ENCODE measurements at regions of chr14 and their contacts with region 1.

Region 1: DNA sequence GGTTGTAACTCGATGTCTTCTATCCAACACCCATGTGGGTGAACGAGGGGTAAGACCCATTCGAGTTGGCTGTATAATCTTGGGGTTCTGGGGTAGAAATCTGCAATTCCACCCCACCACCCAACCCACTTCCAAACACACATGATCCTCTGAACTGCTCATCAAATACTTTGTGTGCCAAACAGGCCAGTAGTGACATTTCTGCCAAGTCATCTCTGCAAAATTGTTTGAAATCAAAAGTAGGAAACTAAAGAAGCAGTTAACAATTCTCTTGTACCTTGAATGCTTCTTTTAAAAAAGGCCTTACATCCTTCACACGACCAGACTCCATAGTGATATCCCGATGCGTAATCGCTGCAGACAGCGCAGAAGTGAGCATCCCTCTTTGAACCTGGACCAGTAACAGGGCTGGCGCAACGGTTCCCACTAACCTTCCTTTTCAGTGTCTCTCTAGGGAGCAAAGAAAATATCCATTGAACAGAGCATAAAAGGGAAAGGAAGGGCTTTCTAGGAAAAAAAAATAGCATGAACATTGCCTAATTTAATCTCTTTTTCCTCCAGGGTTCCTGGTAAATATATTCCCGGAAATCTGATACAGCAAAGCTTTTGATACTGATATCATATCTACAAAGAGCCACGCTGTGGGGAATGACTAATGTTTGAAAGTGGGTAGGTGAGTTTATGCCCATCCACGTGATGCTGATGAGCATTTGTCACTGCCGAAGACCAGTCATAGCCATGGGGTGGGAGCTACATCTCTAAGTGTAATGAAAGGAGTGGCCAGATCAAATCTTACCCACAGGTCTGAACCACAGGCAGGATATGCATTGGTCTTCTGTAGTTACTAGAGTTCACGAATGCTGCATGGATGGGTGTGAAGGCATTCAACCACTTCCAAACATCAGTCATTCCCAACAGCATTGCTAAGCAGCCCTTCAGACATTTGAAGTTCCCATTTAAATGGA is 14.2 kb downstream of the ESR2 start:
- DNase-seq: no peak
- H3K4me3 ChIP-seq: no peak overlapping the region
- H3K27ac ChIP-seq: no peak overlapping the region
- H3K4me1 ChIP-seq: no peaks in the 10 kb centered on the region
- H3K27me3 ChIP-seq: no peaks in the 10 kb centered on the region
- CTCF ChIP-seq: no peak

Region 2: GRCh38 chr14:63418020-63418419 is 862.0 kb before region 1 on chr14:
- CTCF ChIA-PET with region 1: no interaction called
- POLR2A ChIA-PET with region 1: no interaction called
- intact Hi-C with region 1: no loop called
- DNase-seq: no peak
- H3K4me3 ChIP-seq: no peak overlapping the region
- H3K27ac ChIP-seq: no peak overlapping the region
- H3K4me1 ChIP-seq: no peaks in the 10 kb centered on the region
- H3K27me3 ChIP-seq: no peaks in the 10 kb centered on the region
- CTCF ChIP-seq: no peak

Region 3: DNA sequence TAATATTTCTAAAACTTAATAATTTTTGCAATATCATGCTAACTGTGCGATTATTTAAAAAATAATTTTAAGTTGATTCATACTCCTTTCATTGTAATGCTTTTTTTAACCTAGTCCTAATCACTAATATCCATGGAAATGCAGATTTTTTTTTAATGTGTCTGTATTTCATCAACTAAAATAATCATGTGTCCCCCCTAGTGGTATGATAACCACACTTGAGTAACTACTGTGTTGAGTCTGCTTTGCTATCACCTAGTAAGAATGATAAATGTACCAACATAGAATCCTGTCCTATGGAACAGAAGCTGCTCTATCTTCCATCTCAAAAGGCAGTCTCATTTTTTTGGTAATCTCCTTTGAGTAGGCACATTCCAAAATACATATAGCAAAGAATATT is 446.3 kb before region 1 on chr14:
- CTCF ChIA-PET with region 1: no interaction called
- POLR2A ChIA-PET with region 1: no interaction called
- intact Hi-C with region 1: no loop called
- DNase-seq: no peak
- H3K4me3 ChIP-seq: no peak overlapping the region
- H3K27ac ChIP-seq: no peak overlapping the region
- H3K4me1 ChIP-seq: peaks cover 11% of the 10 kb centered on the region
- H3K27me3 ChIP-seq: no peaks in the 10 kb centered on the region
- CTCF ChIP-seq: no peak

Region 4: DNA sequence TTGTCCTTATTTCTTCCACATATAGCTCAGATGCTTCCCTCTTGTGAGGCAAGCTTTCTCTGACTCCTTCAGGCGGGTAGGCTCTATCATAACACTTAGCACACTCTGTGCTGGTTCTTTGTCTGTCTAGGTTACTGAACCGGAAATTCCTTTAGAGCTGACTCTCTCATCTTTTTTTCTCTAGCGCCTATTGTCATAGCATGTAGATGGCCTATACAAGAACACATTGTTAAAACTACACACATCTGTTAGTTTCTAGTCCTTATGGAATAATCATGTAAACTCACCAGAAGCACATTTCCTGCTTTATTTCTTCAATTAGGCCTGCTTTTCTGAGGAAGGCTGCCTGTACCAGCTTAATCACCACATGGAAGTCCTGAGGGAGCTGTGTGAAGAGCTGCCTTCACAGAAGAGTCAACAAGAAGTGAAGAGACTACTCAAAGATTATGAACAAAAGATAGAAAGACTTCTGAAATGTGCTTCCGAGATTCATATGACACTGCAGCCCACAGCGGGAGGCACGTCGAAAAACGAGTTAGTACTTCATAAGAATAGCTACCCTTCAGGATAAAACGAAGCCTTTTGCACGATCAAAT is 283.3 kb before region 1 on chr14:
- CTCF ChIA-PET with region 1: interaction called, 10 read pairs
- POLR2A ChIA-PET with region 1: no interaction called
- intact Hi-C with region 1: no loop called
- DNase-seq: peak; percentile 67
- H3K4me3 ChIP-seq: no peak overlapping the region
- H3K27ac ChIP-seq: peak overlapping the region; percentile 36
- H3K4me1 ChIP-seq: no peaks in the 10 kb centered on the region
- H3K27me3 ChIP-seq: no peaks in the 10 kb centered on the region
- CTCF ChIP-seq: no peak

Region 5: GRCh38 chr14:64232095-64232838 is 47.7 kb before region 1 on chr14:
- CTCF ChIA-PET with region 1: no interaction called
- POLR2A ChIA-PET with region 1: interaction called, 10 read pairs
- intact Hi-C with region 1: no loop called
- DNase-seq: no peak
- H3K4me3 ChIP-seq: no peak overlapping the region
- H3K27ac ChIP-seq: no peak overlapping the region
- H3K4me1 ChIP-seq: no peaks in the 10 kb centered on the region
- H3K27me3 ChIP-seq: no peaks in the 10 kb centered on the region
- CTCF ChIP-seq: no peak